BJ (cell line): ENCODE measurements at regions of chr12 and their contacts with region 1.

Region 1: DNA sequence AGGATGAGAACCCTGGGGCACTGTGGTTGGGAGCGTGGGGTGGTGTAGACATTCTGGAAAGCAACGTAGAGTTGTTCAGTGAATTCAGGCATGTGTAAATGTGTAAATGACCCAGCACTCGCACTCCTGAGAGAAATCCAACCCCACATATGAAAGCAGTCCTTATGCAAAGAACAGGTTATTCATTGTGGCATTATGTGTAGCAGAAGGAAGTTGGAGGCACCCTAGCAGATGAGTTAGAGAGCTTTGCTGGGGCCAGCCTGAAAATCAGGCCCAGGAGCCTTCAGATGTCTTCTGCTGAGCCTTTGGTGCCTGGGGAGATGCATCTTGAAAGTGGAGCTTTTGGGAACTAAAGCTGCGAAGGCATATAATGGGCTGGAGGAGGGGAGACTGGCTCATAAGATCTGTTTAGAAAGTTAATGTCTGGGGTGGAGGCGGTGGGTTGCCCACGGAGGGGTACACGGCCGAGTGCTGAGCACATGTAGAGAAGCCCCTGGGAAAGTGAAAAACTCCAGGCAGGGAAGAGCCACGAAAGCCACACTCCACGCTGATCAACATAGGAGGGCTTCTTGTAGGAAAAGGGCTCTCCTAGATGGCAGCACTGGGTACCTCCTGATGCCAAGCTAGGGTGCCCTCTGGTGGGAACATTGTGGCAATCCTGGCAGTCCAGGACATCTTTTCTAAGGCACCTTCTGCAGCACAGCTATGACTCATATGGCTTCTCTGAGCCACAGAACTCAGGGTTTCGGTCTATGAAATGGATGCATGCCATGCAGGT is 6.0 kb upstream of the KRT83 start:
- DNase-seq: peak; percentile 70
- H3K4me3 ChIP-seq: no peak overlapping the region
- H3K27me3 ChIP-seq: peaks cover 2% of the 10 kb centered on the region; the same call in 1 of the 2 replicates
- CTCF ChIP-seq: peak; percentile 94

Region 2: GRCh38 chr12:50400598-50401364 is 1926.5 kb before region 1 on chr12 and contains the start of gene LARP4:
- CTCF ChIA-PET with region 1: no interaction called
- POLR2A ChIA-PET with region 1: no interaction called
- DNase-seq: peak; percentile 72
- H3K4me3 ChIP-seq: peak within 1 kb of the TSS; percentile 76
- H3K27me3 ChIP-seq: no peaks in the 10 kb centered on the region
- CTCF ChIP-seq: no peak
- polyA plus RNA-seq, gene LARP4: 10.1 and 18.0 TPM in 2 replicates

Region 3: DNA sequence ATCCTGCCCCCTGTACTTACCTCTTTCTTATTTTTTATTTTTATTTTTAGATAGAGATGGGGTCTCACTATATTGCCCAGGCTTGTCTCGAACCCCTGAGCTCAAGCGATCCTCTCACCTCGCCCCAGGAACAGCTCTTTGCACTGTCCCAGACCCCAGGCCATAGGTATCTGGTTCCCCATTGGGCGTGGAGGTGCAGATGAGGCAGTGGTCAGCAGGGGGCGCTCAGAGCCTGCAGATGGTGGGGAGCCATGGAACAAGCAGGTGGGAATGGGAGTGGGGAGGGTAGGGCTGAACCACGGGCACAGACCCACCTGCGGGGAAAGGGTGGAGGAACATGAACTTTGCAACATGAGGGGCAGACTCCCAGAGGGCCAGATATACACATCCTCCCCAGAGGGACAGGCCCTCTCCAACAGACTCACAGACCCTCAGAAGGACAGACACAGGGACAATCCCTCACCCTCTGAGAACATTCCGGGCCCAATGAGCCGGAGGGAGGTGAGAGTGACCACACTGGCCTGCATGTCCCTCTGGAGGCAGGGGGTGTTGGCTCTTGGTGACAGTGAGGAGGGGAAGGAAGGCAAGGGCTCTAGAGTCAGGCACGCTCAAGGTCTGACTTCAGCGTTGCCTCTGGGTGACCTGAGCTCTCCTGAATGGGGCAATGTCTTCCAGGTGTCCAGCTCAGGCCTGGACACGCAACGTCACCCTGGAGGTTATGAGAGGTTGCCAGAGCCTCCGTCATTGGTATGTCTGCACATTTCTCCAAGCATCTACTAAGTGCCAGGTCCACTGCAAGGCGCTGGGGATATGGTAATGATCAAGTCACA is 170.3 kb before region 1 on chr12:
- CTCF ChIA-PET with region 1: interaction called, 75 read pairs
- POLR2A ChIA-PET with region 1: no interaction called
- DNase-seq: no peak
- H3K4me3 ChIP-seq: no peak overlapping the region
- H3K27me3 ChIP-seq: no peaks in the 10 kb centered on the region
- CTCF ChIP-seq: peak; percentile 96

Region 4: DNA sequence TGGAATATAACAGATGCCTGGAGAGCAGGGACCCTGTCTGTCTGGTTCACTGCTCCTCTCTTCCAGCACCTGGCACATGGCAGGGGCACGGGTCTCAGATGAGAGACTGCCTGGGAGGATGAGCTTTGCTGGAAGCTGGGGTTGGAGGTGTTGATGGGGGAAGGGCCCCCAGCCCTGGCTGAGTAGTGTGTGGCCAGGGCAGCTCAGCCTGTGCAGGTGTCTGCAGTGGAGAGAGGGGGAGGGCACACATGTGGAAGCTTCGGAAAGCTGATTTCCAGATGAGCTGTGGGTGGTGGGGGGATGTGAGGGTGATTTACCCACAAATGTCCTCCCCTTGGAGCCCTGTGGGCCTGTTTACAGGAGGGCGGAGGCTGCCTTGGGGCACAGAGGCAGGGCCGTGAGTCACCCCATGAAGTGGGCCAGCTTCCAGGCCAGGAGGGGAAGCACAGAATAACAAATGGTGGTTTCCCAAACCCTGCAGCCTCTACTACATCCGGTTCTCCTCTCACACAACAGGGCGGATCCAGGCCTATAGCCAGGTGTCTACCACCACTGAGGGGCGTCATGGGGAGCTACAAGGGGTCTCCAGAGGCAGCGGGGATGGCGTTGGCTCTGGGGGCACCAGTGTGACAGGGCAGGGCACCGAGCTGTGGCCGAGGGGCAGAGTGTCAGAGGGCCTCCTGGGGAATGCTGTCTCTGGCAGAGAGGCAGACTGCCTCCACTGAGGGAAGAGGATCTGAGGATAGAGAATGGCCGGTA is 83.2 kb before region 1 on chr12:
- CTCF ChIA-PET with region 1: interaction called, 11 read pairs
- POLR2A ChIA-PET with region 1: no interaction called
- DNase-seq: peak; percentile 90
- H3K4me3 ChIP-seq: no peak overlapping the region
- H3K27me3 ChIP-seq: no peaks in the 10 kb centered on the region
- CTCF ChIP-seq: no peak

Region 5: GRCh38 chr12:52307836-52308805 is 19.1 kb before region 1 on chr12:
- CTCF ChIA-PET with region 1: interaction called, 53 read pairs
- POLR2A ChIA-PET with region 1: interaction called, 3 read pairs
- DNase-seq: no peak
- H3K4me3 ChIP-seq: peak overlapping the region; percentile 42
- H3K27me3 ChIP-seq: no peaks in the 10 kb centered on the region; the same call in 1 of the 2 replicates
- CTCF ChIP-seq: peak; percentile 21; the same call in 1 of the 2 replicates

Region 6: GRCh38 chr12:52344137-52344536 is 16.9 kb after region 1 on chr12:
- CTCF ChIA-PET with region 1: interaction called, 22 read pairs
- POLR2A ChIA-PET with region 1: no interaction called
- DNase-seq: no peak
- H3K4me3 ChIP-seq: no peak overlapping the region
- H3K27me3 ChIP-seq: peaks cover 12% of the 10 kb centered on the region
- CTCF ChIP-seq: no peak

Region 7: GRCh38 chr12:52387859-52388258 is 60.6 kb after region 1 on chr12:
- CTCF ChIA-PET with region 1: no interaction called
- POLR2A ChIA-PET with region 1: no interaction called
- DNase-seq: no peak
- H3K4me3 ChIP-seq: no peak overlapping the region
- H3K27me3 ChIP-seq: peaks cover 14% of the 10 kb centered on the region
- CTCF ChIP-seq: no peak

Region 8: GRCh38 chr12:52436000-52436827 is 109.0 kb after region 1 on chr12:
- CTCF ChIA-PET with region 1: no interaction called
- POLR2A ChIA-PET with region 1: no interaction called
- DNase-seq: no peak
- H3K4me3 ChIP-seq: no peak overlapping the region
- H3K27me3 ChIP-seq: peaks cover 7% of the 10 kb centered on the region
- CTCF ChIP-seq: no peak